ENCODE measurements at regions of chrX and their contacts with region 1.

Region 1: GRCh38 chrX:46573331-46573891 is at the start of gene CHST7:
- DNase-seq: peak; percentile 50 to 70 (median 57)
- H3K4me3 ChIP-seq: peak within 1 kb of the TSS; percentile 14 to 69
- H3K4me3 Mint-ChIP-seq: peak within 1 kb of the TSS; percentile 61 to 91 (median 79)
- H3K27ac ChIP-seq: peak within 1 kb of the TSS; percentile 65
- H3K27ac Mint-ChIP-seq: peak within 1 kb of the TSS; percentile 75 to 89 (median 85)
- H3K4me1 ChIP-seq: peaks cover 42% of the 10 kb centered on the region
- H3K4me1 Mint-ChIP-seq: peaks cover 21 to 44% (median 33%) of the 10 kb centered on the region in 4 donors
- H3K27me3 ChIP-seq: no peaks in the 10 kb centered on the region
- H3K27me3 Mint-ChIP-seq: no peaks in the 10 kb centered on the region
- total RNA-seq, gene CHST7: 11.4 to 11.8 TPM

Region 2: GRCh38 chrX:45668686-45669443 is 904.5 kb before region 1 on chrX:
- CTCF ChIA-PET with region 1: no interaction called
- POLR2A ChIA-PET with region 1: no interaction called
- intact Hi-C with region 1: no loop called
- DNase-seq: no peak
- H3K4me3 ChIP-seq: no peak overlapping the region
- H3K4me3 Mint-ChIP-seq: no peak overlapping the region
- H3K27ac ChIP-seq: no peak overlapping the region
- H3K27ac Mint-ChIP-seq: no peak overlapping the region
- H3K4me1 ChIP-seq: no peaks in the 10 kb centered on the region
- H3K4me1 Mint-ChIP-seq: no peaks in the 10 kb centered on the region
- H3K27me3 ChIP-seq: no peaks in the 10 kb centered on the region
- H3K27me3 Mint-ChIP-seq: no peaks in the 10 kb centered on the region

Region 3: DNA sequence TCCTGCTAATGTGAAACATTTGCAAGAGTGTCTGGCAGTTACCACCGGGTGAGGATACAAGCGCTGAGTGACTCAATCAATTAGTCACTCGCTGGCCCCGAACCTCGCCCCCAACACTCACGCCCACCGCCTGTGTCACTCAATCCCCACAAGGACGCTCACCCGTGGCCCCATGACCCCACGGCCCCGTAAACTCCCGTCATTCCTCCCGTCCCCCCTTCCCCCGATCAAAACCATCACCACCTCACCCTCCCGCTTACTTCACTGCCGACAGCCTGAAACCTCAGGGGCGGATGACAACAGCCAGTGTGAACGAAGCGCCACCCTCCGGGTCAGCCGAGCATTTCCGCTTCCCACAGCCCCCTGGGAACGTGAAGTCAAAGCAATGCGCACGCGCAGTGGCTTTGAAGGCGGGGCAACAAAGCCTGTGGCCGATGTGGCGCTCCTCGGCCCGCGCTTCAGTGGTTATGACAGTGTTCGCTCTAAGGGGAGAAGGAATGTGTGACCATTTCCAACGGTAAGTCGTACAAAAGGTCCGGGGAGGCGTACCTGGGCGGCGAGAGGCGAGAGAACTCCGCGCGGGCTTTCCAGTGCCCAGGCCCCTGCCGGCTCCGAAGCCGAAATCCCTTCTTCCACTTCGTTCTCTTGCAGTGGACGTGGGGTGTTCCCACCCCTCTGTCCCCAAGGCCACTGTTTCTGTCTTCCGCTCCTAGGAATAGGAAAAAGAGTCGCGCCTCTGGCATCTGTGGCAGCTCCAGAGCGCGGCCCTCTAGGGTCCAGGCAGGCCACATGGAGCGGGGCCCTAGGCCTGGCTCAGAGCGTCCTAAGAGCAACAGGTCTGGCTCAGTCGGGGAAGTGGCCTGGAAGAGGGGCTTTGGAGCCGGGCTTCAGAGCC is 28.1 kb before region 1 on chrX and contains the start of gene ZNF674:
- CTCF ChIA-PET with region 1: no interaction called
- POLR2A ChIA-PET with region 1: interaction called, 3 read pairs
- intact Hi-C with region 1: loop called (anchors 1 kb)
- DNase-seq: peak; percentile 91 to 97 (median 92)
- H3K4me3 ChIP-seq: peak within 1 kb of the TSS; percentile 61 to 81
- H3K4me3 Mint-ChIP-seq: peak within 1 kb of the TSS; percentile 89 to 97 (median 94)
- H3K27ac ChIP-seq: peak within 1 kb of the TSS; percentile 94
- H3K27ac Mint-ChIP-seq: peak within 1 kb of the TSS; percentile 91 to 99 (median 98)
- H3K4me1 ChIP-seq: peaks cover 29% of the 10 kb centered on the region
- H3K4me1 Mint-ChIP-seq: peaks cover 14 to 35% (median 22%) of the 10 kb centered on the region in 4 donors
- H3K27me3 ChIP-seq: no peaks in the 10 kb centered on the region
- H3K27me3 Mint-ChIP-seq: no peaks in the 10 kb centered on the region
- total RNA-seq, gene ZNF674: 6.0 to 8.6 TPM

Region 4: GRCh38 chrX:46588263-46588662 is 14.9 kb after region 1 on chrX:
- CTCF ChIA-PET with region 1: interaction called, 39 read pairs
- POLR2A ChIA-PET with region 1: interaction called, 83 read pairs
- intact Hi-C with region 1: loop called (anchors 1 kb)
- DNase-seq: peak in 4 of 5 donors; percentile 35 to 65 (median 38)
- H3K4me3 ChIP-seq: peak overlapping the region in 1 of 2 donors; percentile 6
- H3K4me3 Mint-ChIP-seq: peak overlapping the region; percentile 75 to 88 (median 80)
- H3K27ac ChIP-seq: peak overlapping the region; percentile 47
- H3K27ac Mint-ChIP-seq: peak overlapping the region; percentile 89 to 94 (median 91)
- H3K4me1 ChIP-seq: peaks cover 61% of the 10 kb centered on the region
- H3K4me1 Mint-ChIP-seq: peaks cover 23 to 68% (median 45%) of the 10 kb centered on the region in 4 donors
- H3K27me3 ChIP-seq: no peaks in the 10 kb centered on the region
- H3K27me3 Mint-ChIP-seq: no peaks in the 10 kb centered on the region

Region 5: DNA sequence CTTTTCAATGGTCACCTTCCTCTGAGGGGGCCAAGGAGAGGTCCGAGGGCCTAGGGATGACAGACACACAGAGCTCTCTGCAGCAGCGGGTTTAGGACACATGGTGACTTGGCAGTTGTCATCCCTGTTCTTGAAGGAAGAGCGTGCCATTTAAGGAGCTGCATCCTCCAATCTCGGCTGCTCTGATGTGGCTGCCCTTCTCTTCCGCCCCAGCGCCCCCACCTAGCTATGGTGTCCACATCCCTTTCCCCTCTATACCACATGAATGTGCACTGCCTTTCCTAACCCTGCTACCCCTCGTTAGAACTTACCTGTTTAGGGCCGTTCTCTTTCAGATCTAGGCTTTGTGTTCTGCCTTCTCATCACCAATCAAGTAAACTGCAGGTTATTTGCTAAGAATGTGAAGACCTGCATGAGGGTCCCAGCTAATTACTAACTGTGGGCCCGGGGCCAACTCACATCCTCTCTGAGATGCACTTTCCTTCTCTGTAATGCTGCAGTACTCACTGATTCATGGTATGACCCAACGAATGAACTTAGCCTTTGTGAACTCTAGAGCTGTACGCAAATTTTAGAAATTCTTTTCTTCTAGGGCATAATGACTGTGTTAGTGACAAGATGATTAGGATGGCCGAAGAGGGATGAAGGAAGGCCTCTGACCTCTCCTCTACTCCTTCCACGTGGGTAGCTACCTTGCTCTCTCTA is 38.4 kb after region 1 on chrX:
- CTCF ChIA-PET with region 1: interaction called, 14 read pairs
- POLR2A ChIA-PET with region 1: interaction called, 20 read pairs
- intact Hi-C with region 1: loop called (anchors 2 kb)
- DNase-seq: peak; percentile 65 to 77 (median 70)
- H3K4me3 ChIP-seq: peak overlapping the region in 1 of 2 donors; percentile 30
- H3K4me3 Mint-ChIP-seq: peak overlapping the region; percentile 44 to 78 (median 72)
- H3K27ac ChIP-seq: no peak overlapping the region
- H3K27ac Mint-ChIP-seq: peak overlapping the region in 5 of 7 donors; percentile 18 to 81 (median 72)
- H3K4me1 ChIP-seq: peaks cover 47% of the 10 kb centered on the region
- H3K4me1 Mint-ChIP-seq: peaks cover 27 to 57% (median 40%) of the 10 kb centered on the region in 4 donors
- H3K27me3 ChIP-seq: no peaks in the 10 kb centered on the region
- H3K27me3 Mint-ChIP-seq: no peaks in the 10 kb centered on the region

Region 6: GRCh38 chrX:46642145-46642544 is 68.7 kb after region 1 on chrX:
- CTCF ChIA-PET with region 1: interaction called, 32 read pairs
- POLR2A ChIA-PET with region 1: interaction called, 11 read pairs
- intact Hi-C with region 1: loop called (anchors 1 kb)
- DNase-seq: peak in 4 of 5 donors; percentile 39 to 46 (median 42)
- H3K4me3 ChIP-seq: no peak overlapping the region
- H3K4me3 Mint-ChIP-seq: peak overlapping the region in 1 of 8 donors; percentile 11
- H3K27ac ChIP-seq: no peak overlapping the region
- H3K27ac Mint-ChIP-seq: no peak overlapping the region
- H3K4me1 ChIP-seq: no peaks in the 10 kb centered on the region
- H3K4me1 Mint-ChIP-seq: peaks cover 4 to 13% (median 6%) of the 10 kb centered on the region in 4 donors
- H3K27me3 ChIP-seq: no peaks in the 10 kb centered on the region
- H3K27me3 Mint-ChIP-seq: no peaks in the 10 kb centered on the region

Region 7: DNA sequence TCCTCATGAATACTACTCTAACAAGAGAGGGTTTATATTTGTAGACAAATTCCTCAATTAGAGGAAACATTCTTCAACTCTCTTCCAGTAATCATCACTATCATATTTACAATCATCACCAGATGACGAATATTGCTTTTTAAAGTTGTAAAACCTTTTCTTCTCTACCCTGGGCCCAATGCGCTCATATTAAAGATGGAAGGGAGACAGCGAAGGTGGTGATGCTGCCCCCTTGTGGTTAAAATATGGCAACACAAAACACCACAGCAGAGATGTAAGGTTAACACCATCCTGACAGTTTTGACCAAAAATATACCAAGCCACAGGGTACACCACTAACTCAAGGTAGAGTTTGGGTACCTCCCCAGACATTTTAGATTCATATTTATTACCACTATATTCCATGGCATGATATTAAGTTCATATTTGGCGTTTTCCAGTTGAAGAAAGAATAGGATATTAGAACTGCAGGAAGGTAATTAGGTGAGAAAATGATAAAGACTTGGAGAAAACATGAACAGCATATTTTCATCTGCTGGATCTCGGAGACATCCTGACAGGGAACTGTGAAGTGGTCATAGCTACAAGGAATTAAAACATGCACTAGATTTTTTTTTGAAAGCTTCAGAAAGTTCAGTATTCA is 112.7 kb after region 1 on chrX:
- CTCF ChIA-PET with region 1: interaction called, 4 read pairs
- POLR2A ChIA-PET with region 1: no interaction called
- intact Hi-C with region 1: loop called (anchors 1 kb)
- DNase-seq: peak in 4 of 5 donors; percentile 34 to 45 (median 42)
- H3K4me3 ChIP-seq: no peak overlapping the region
- H3K4me3 Mint-ChIP-seq: no peak overlapping the region
- H3K27ac ChIP-seq: no peak overlapping the region
- H3K27ac Mint-ChIP-seq: peak overlapping the region in 1 of 7 donors; percentile 60
- H3K4me1 ChIP-seq: no peaks in the 10 kb centered on the region
- H3K4me1 Mint-ChIP-seq: peaks cover 0 to 2% (median 0%) of the 10 kb centered on the region in 4 donors
- H3K27me3 ChIP-seq: no peaks in the 10 kb centered on the region
- H3K27me3 Mint-ChIP-seq: no peaks in the 10 kb centered on the region

Measured in CD4-positive, alpha-beta memory T cell (primary cell).